ENCODE measurements at regions of chr10 and their contacts with region 1.

Region 1: GRCh38 chr10:6580279-6581029 is 378 bp upstream of the PRKCQ start:
- H3K4me3 Mint-ChIP-seq: peak overlapping the region; percentile 78
- H3K27ac Mint-ChIP-seq: peak overlapping the region; percentile 63
- H3K4me1 Mint-ChIP-seq: peaks cover 37% of the 10 kb centered on the region
- H3K27me3 Mint-ChIP-seq: peaks cover 40% of the 10 kb centered on the region

Region 2: DNA sequence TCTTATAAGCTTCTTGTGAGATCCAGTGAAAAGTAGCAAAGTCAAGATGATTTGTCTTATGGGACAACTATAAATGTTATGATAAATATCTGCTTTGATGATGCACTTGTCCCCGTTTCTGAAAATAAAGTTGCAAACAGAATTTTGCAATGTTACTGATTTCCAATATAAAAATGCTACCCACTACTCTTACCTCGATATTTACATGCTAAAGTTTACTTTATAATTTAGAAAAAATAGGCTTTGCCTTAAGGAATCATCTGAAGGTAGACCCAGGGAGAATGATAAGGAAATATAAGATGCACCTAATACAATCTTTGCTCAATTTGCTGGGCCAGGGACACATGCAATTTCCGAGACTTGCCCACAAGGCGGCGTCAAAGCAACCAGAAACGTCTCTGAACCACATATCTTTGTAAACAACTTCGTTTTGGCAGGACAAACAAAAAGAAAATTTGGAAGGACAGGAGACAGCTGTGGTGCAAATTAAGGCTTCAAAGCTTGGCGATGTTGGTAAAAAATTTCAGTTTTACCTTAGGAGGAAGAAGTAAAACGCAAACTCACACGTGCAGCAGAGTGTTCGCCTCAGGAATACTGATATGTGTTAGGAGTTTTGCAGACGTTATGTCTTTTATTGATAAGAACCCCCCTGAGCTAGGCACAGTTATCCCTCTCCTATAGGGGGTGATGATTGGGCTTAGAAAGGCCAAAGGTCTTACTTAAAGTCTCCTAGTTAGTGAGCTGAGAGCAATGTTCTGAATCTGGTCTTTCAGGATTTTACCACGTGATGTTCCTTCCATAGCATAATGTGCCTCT is 134.7 kb before region 1 on chr10:
- intact Hi-C with region 1: loop called (anchors 10 kb)
- H3K4me3 Mint-ChIP-seq: peak overlapping the region; percentile 28
- H3K27ac Mint-ChIP-seq: no peak overlapping the region
- H3K4me1 Mint-ChIP-seq: no peaks in the 10 kb centered on the region
- H3K27me3 Mint-ChIP-seq: no peaks in the 10 kb centered on the region